Heart left ventricle (tissue), 16 donors: ENCODE measurements at regions of chr2 and their contacts with region 1.

Region 1: GRCh38 chr2:37672104-37672869 is 845 bp upstream of the CDC42EP3 start:
- DNase-seq: peak; percentile 83 to 87 (median 84)
- ATAC-seq: peak; percentile 68 to 86 (median 73)
- H3K4me3 ChIP-seq: peak overlapping the region; percentile 54 to 99 (median 92)
- H3K27ac ChIP-seq: peak overlapping the region; percentile 92 to 100 (median 98)
- H3K4me1 ChIP-seq: peaks cover 0 to 64% (median 14%) of the 10 kb centered on the region in 12 donors
- H3K27me3 ChIP-seq: no peaks in the 10 kb centered on the region
- CTCF ChIP-seq: peak in 1 of 12 donors; percentile 9
- POLR2A ChIP-seq: peak in 1 of 2 donors; percentile 19

Region 2: GRCh38 chr2:37648331-37649011 is 23.8 kb before region 1 on chr2:
- intact Hi-C with region 1: loop called in 2 of 10 experiments (anchors 1 to 2 kb)
- DNase-seq: peak; percentile 54 to 86 (median 78)
- ATAC-seq: peak; percentile 71 to 85 (median 77)
- H3K4me3 ChIP-seq: peak overlapping the region in 3 of 12 donors; percentile 1 to 13 (median 7)
- H3K27ac ChIP-seq: peak overlapping the region; percentile 58 to 95 (median 90)
- H3K4me1 ChIP-seq: peaks cover 28 to 100% (median 93%) of the 10 kb centered on the region in 12 donors
- H3K27me3 ChIP-seq: no peaks in the 10 kb centered on the region
- CTCF ChIP-seq: peak in 10 of 12 donors; percentile 21 to 50 (median 40)
- POLR2A ChIP-seq: no peak

Region 3: DNA sequence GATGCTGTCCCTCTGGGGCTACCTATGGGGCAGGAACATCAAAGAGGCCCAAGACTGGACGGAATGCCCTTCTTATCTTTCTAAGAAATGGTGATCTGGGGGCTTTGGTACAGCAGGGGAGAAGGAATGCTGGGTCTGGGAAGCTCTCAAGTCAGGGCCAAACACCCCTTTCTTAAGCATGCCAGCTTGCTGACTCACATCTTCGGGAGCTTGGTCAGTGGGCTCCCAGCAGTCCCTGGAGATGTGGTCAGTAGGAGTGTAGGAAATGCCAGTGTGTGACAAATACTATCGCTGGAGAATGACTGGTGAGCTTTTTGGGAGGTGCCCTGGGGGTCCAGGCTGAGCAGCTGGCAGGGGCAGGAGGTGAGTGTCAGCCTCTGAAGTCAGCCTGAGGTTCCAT is 104.2 kb after region 1 on chr2:
- intact Hi-C with region 1: loop called in 1 of 10 experiments (anchors 10 kb)
- DNase-seq: no peak
- ATAC-seq: no peak
- H3K4me3 ChIP-seq: no peak overlapping the region
- H3K27ac ChIP-seq: peak overlapping the region in 1 of 12 donors; percentile 81
- H3K4me1 ChIP-seq: peaks cover 0 to 27% (median 6%) of the 10 kb centered on the region in 12 donors
- H3K27me3 ChIP-seq: no peaks in the 10 kb centered on the region
- CTCF ChIP-seq: no peak
- POLR2A ChIP-seq: no peak

Region 4: DNA sequence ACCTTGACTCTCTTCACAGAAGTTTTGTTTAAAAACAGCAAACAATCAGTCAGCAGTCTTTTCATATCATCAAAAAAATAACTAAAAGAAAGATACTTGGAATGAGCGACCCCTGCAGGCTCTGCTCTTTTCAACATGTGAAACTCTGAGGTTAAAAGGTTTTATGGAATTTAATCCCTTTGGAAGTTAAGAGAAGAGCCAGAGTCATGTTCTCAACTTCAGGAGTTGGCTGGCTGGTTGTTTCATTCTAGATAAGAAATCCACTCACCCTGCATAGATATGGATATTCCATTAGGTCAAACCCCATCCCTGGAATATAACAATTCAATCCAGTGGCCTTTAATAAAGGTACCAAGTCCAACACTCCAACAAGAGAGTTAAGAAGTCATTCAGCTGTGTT is 137.2 kb after region 1 on chr2:
- intact Hi-C with region 1: loop called in 4 of 10 experiments (anchors 5 to 10 kb)
- DNase-seq: peak in 3 of 5 donors; percentile 27 to 36 (median 32)
- ATAC-seq: peak in 3 of 4 donors; percentile 34 to 62 (median 59)
- H3K4me3 ChIP-seq: no peak overlapping the region
- H3K27ac ChIP-seq: peak overlapping the region in 9 of 12 donors; percentile 6 to 65 (median 25)
- H3K4me1 ChIP-seq: peaks cover 0 to 16% (median 11%) of the 10 kb centered on the region in 12 donors
- H3K27me3 ChIP-seq: no peaks in the 10 kb centered on the region
- CTCF ChIP-seq: peak; percentile 8 to 67 (median 50)
- POLR2A ChIP-seq: no peak

Region 5: GRCh38 chr2:37871456-37872191 is 199.3 kb after region 1 on chr2:
- intact Hi-C with region 1: loop called in 5 of 10 experiments (anchors 2 to 10 kb)
- DNase-seq: no peak
- ATAC-seq: peak in 3 of 4 donors; percentile 19 to 50 (median 32)
- H3K4me3 ChIP-seq: no peak overlapping the region
- H3K27ac ChIP-seq: peak overlapping the region in 9 of 12 donors; percentile 16 to 84 (median 68)
- H3K4me1 ChIP-seq: peaks cover 0 to 87% (median 52%) of the 10 kb centered on the region in 12 donors
- H3K27me3 ChIP-seq: no peaks in the 10 kb centered on the region
- CTCF ChIP-seq: no peak
- POLR2A ChIP-seq: no peak